Right ventricle myocardium inferior (tissue), 1 donor: ENCODE measurements at regions of chr16 and their contacts with region 1.

Region 1: GRCh38 chr16:17313085-17313611 is 157.6 kb downstream of the XYLT1 start:
- DNase-seq: no peak
- ATAC-seq: peak; percentile 53

Region 2: GRCh38 chr16:17184026-17184425 is 129.1 kb before region 1 on chr16:
- intact Hi-C with region 1: no loop called
- DNase-seq: no peak
- ATAC-seq: no peak

Region 3: DNA sequence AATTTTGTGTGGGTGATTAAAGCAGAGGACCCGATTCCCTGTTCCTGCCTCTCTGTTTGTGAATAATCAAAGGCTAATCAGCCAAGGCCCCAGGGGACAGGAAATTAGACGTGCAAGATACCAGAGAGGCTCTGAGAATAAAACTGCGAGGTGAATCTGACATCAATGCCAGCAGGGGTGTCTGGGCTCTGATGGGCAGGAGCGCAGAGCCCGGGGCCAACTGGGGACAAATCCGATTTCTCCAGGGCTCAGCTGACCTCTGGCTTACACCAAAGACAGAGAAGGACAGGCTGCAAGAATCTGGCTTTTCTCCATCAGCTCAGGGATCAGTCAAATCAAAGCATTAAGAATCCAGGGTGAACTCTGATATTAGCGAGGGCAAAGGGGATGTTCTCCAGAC is 16.7 kb before region 1 on chr16:
- intact Hi-C with region 1: loop called (anchors 1 kb)
- DNase-seq: no peak
- ATAC-seq: peak; percentile 83